ENCODE measurements at regions of chr1 and their contacts with region 1.

Region 1: DNA sequence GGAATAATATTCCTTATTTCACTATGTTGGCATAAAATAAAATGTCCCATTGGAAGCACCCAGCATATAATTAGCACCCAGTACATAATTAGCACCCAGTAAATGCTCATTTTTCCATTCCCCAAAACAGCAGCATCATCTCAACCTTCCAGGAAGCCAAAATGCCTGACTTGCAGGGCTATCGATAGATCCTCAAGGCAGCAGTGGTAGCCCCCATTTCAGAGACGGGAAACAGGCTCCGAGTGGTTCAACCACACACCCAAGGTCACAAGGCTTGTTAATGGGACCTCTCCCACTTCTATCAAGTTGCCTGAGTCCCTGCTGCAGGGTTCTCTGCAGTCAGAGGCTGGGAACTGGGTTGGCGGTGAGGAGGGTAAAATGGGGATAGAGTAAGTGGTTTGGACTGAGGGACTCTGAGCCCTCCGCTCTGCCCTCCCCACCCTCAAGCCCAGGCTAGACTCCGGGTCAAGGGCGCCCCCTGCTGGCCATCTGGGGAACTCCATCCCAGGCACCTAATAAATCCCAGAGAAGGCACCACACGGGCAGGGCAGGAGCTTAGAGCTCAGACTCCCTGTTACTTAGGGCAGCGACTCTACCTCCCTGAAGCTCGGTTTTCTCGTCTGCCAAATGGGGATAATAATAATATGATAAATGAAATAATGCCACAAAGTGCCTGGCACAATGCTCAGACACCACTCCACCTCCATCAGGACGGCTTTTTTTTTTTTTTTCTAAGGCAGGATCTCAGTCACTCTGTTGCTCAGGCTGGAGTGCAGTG is 21.9 kb upstream of the LAPTM5 start:
- DNase-seq: peak; percentile 92
- ATAC-seq: peak; percentile 76
- H3K4me3 ChIP-seq: no peak overlapping the region
- H3K4me3 Mint-ChIP-seq: peak overlapping the region; percentile 53
- H3K27ac ChIP-seq: peak overlapping the region in 1 of 2 donors; percentile 59
- H3K27ac Mint-ChIP-seq: peak overlapping the region; percentile 84
- H3K4me1 ChIP-seq: peaks cover 43 to 56% of the 10 kb centered on the region in 2 donors
- H3K4me1 Mint-ChIP-seq: peaks cover 42% of the 10 kb centered on the region
- H3K27me3 ChIP-seq: peaks cover 0 to 7% (median 0%) of the 10 kb centered on the region in 4 experiments
- H3K27me3 Mint-ChIP-seq: no peaks in the 10 kb centered on the region
- CTCF ChIP-seq: peak; percentile 93

Region 2: GRCh38 chr1:30668024-30668423 is 111.5 kb before region 1 on chr1:
- CTCF ChIA-PET with region 1: no interaction called
- POLR2A ChIA-PET with region 1: no interaction called
- intact Hi-C with region 1: no loop called
- DNase-seq: no peak
- ATAC-seq: no peak
- H3K4me3 ChIP-seq: no peak overlapping the region
- H3K4me3 Mint-ChIP-seq: no peak overlapping the region
- H3K27ac ChIP-seq: no peak overlapping the region
- H3K27ac Mint-ChIP-seq: no peak overlapping the region
- H3K4me1 ChIP-seq: no peaks in the 10 kb centered on the region
- H3K4me1 Mint-ChIP-seq: no peaks in the 10 kb centered on the region
- H3K27me3 ChIP-seq: peaks cover 0 to 9% (median 3%) of the 10 kb centered on the region in 4 experiments
- H3K27me3 Mint-ChIP-seq: peaks cover 28% of the 10 kb centered on the region
- CTCF ChIP-seq: no peak

Region 3: DNA sequence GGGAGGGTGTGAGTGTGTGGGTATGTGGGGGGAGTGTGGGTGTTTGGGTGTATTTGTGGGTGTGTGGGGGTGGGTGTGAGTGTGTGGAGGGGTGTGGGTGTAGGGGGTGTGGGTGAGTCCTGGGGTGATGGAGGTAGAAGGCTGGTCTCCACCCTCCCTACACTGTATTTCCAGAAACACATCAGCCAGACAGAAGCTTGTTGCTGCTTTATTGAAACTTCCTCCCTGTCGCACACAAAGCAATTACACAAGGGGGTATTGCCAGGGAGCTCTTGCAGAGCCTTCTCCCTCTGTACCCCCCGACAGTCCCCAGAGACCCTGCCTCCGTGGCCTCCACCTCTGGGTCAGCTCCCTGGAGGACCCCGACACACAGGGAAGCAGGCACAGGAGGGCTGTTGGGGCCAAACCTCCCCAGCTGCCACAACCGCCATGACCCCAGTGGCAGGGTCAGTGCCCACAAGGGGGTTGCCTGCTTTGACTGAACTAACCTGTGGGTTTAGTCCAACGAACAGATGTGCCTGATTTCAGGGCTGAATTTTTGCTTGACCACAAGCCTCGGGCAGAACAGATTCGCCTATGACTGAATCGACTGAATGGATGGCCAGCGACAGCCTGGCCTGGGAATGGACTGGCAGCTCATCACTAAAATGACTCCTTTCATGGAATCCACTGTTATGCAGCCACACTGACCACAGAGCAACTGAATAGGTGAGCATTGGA is 47.0 kb before region 1 on chr1:
- CTCF ChIA-PET with region 1: interaction called, 536 read pairs
- POLR2A ChIA-PET with region 1: interaction called, 15 read pairs
- intact Hi-C with region 1: no loop called
- DNase-seq: peak; percentile 76
- ATAC-seq: peak; percentile 50
- H3K4me3 ChIP-seq: no peak overlapping the region
- H3K4me3 Mint-ChIP-seq: peak overlapping the region; percentile 19
- H3K27ac ChIP-seq: peak overlapping the region; percentile 70 to 82
- H3K27ac Mint-ChIP-seq: peak overlapping the region; percentile 94
- H3K4me1 ChIP-seq: peaks cover 41 to 59% of the 10 kb centered on the region in 2 donors
- H3K4me1 Mint-ChIP-seq: peaks cover 75% of the 10 kb centered on the region
- H3K27me3 ChIP-seq: no peaks in the 10 kb centered on the region
- H3K27me3 Mint-ChIP-seq: no peaks in the 10 kb centered on the region
- CTCF ChIP-seq: no peak

Region 4: GRCh38 chr1:30748699-30749401 is 30.6 kb before region 1 on chr1:
- CTCF ChIA-PET with region 1: interaction called, 312 read pairs
- POLR2A ChIA-PET with region 1: interaction called, 10 read pairs
- intact Hi-C with region 1: loop called (anchors 5 kb)
- DNase-seq: no peak
- ATAC-seq: no peak
- H3K4me3 ChIP-seq: peak overlapping the region in 4 of 5 experiments; percentile 10 to 96 (median 32)
- H3K4me3 Mint-ChIP-seq: peak overlapping the region; percentile 89
- H3K27ac ChIP-seq: peak overlapping the region; percentile 98 to 100
- H3K27ac Mint-ChIP-seq: peak overlapping the region; percentile 97
- H3K4me1 ChIP-seq: peaks cover 96 to 100% of the 10 kb centered on the region in 2 donors
- H3K4me1 Mint-ChIP-seq: peaks cover 97% of the 10 kb centered on the region
- H3K27me3 ChIP-seq: no peaks in the 10 kb centered on the region
- H3K27me3 Mint-ChIP-seq: no peaks in the 10 kb centered on the region
- CTCF ChIP-seq: no peak

Region 5: GRCh38 chr1:30763651-30764248 is 15.7 kb before region 1 on chr1:
- CTCF ChIA-PET with region 1: interaction called, 312 read pairs
- POLR2A ChIA-PET with region 1: interaction called, 26 read pairs
- intact Hi-C with region 1: no loop called
- DNase-seq: no peak
- ATAC-seq: no peak
- H3K4me3 ChIP-seq: no peak overlapping the region
- H3K4me3 Mint-ChIP-seq: no peak overlapping the region
- H3K27ac ChIP-seq: peak overlapping the region in 1 of 2 donors; percentile 98
- H3K27ac Mint-ChIP-seq: peak overlapping the region; percentile 95
- H3K4me1 ChIP-seq: peaks cover 58 to 67% of the 10 kb centered on the region in 2 donors
- H3K4me1 Mint-ChIP-seq: peaks cover 75% of the 10 kb centered on the region
- H3K27me3 ChIP-seq: no peaks in the 10 kb centered on the region
- H3K27me3 Mint-ChIP-seq: no peaks in the 10 kb centered on the region
- CTCF ChIP-seq: no peak

Region 6: DNA sequence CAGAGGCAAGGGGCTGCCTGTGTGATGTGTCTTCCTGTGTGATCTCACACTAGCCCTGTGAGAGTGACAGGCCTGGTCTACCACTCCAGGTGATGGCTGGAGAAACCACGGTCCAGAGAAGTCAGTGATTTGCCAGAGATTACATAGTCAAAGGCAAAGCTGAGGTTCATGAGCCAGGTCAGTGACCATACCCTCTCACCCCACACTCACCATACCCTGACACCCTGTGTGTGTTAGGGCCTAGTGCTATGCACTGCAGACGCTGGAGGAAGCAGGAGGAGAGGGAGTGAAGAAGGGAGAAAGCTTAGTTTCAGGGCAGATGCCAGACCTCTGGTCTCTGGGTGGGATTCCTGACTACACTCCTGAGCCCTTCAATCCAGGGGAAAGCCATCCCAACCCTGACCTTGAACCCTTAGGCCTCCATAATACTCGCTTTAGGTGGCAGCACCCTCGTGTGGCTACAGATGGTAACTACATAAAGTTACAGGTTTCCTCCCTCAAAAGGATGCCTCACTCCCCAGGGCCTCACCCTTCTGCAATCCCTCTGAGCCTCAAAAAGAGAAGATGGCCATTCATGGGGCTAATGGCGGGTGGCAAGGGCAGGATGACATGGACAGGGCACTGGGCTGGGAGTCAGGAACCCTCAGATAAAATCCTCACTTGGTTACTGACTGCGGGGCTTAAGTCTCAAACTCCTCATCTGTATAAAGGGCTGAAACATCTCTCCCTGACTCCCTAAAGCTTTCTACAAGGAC is 149.8 kb after region 1 on chr1:
- CTCF ChIA-PET with region 1: interaction called, 32 read pairs
- POLR2A ChIA-PET with region 1: no interaction called
- intact Hi-C with region 1: loop called (anchors 1 kb)
- DNase-seq: peak; percentile 65
- ATAC-seq: peak; percentile 71
- H3K4me3 ChIP-seq: no peak overlapping the region
- H3K4me3 Mint-ChIP-seq: no peak overlapping the region
- H3K27ac ChIP-seq: no peak overlapping the region
- H3K27ac Mint-ChIP-seq: peak overlapping the region; percentile 26
- H3K4me1 ChIP-seq: peaks cover 0 to 11% of the 10 kb centered on the region in 2 donors
- H3K4me1 Mint-ChIP-seq: peaks cover 13% of the 10 kb centered on the region
- H3K27me3 ChIP-seq: no peaks in the 10 kb centered on the region
- H3K27me3 Mint-ChIP-seq: no peaks in the 10 kb centered on the region
- CTCF ChIP-seq: peak; percentile 86

Measured in B cell (primary cell).